PC-9 (cell line): ENCODE measurements at regions of chr1 and their contacts with region 1.

Region 1: DNA sequence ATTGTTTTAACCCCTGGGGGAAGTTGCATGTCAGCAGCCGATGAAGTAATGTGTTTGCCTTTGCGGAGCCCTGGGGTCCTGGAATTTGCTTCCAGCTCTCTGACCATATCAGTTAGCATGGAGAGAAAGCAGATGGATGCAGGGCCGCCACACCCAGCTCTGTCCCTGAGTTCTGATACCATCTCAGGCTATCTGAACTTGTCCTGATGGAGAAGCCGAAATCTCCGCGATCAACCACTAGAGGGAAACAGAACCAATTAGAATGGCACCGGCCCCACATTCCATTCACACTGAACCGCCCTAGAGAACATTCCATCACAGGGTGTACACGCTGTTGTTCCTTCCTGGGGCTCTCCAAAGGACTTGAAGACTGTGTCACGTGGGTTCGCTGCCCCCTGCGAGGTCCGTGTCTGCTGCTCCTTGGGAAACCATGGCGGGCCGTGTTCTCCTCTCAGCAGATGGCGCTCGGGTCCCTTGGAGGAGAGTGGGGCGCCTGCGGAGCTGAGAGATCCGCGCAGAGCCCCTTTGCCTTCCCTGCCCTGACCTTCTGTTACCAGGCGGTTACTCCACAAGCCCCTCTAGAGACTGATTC is 75.4 kb downstream of the ABCA4 start:
- DNase-seq: peak; percentile 92 to 97
- H3K4me3 ChIP-seq: no peak overlapping the region
- H3K27ac ChIP-seq: peak overlapping the region; percentile 28
- H3K4me1 ChIP-seq: peaks cover 30% of the 10 kb centered on the region
- H3K27me3 ChIP-seq: no peaks in the 10 kb centered on the region
- CTCF ChIP-seq: peak; percentile 90

Region 2: GRCh38 chr1:93607814-93608186 is 437.8 kb before region 1 on chr1:
- CTCF ChIA-PET with region 1: no interaction called
- POLR2A ChIA-PET with region 1: no interaction called
- intact Hi-C with region 1: no loop called
- DNase-seq: no peak
- H3K4me3 ChIP-seq: no peak overlapping the region
- H3K27ac ChIP-seq: no peak overlapping the region
- H3K4me1 ChIP-seq: peaks cover 51% of the 10 kb centered on the region
- H3K27me3 ChIP-seq: no peaks in the 10 kb centered on the region
- CTCF ChIP-seq: no peak

Region 3: GRCh38 chr1:93958032-93958725 is 87.4 kb before region 1 on chr1:
- CTCF ChIA-PET with region 1: no interaction called
- POLR2A ChIA-PET with region 1: no interaction called
- intact Hi-C with region 1: no loop called
- DNase-seq: no peak
- H3K4me3 ChIP-seq: no peak overlapping the region
- H3K27ac ChIP-seq: no peak overlapping the region
- H3K4me1 ChIP-seq: peaks cover 37% of the 10 kb centered on the region
- H3K27me3 ChIP-seq: no peaks in the 10 kb centered on the region
- CTCF ChIP-seq: no peak

Region 4: DNA sequence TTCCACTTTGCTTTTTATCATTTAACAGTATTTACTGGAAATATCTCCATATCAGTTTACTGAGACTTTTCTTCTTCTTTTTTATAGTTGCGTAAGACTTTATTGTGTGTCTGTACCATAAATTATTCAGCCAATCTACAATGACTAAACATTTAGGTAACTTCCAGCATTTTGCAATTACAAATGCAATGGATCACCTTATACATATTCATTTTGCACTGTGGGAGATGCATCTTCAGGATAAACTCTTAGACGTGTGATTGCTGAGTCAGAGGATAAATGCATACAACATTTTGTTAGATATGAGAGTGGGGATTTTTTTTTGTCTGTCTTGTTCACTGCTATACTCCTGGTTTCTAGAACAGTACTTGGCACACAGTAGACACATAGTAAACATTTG is 40.6 kb before region 1 on chr1:
- CTCF ChIA-PET with region 1: no interaction called
- POLR2A ChIA-PET with region 1: no interaction called
- intact Hi-C with region 1: no loop called
- DNase-seq: peak in 1 of 2 experiments; percentile 58
- H3K4me3 ChIP-seq: no peak overlapping the region
- H3K27ac ChIP-seq: no peak overlapping the region
- H3K4me1 ChIP-seq: peaks cover 12% of the 10 kb centered on the region
- H3K27me3 ChIP-seq: no peaks in the 10 kb centered on the region
- CTCF ChIP-seq: no peak

Region 5: DNA sequence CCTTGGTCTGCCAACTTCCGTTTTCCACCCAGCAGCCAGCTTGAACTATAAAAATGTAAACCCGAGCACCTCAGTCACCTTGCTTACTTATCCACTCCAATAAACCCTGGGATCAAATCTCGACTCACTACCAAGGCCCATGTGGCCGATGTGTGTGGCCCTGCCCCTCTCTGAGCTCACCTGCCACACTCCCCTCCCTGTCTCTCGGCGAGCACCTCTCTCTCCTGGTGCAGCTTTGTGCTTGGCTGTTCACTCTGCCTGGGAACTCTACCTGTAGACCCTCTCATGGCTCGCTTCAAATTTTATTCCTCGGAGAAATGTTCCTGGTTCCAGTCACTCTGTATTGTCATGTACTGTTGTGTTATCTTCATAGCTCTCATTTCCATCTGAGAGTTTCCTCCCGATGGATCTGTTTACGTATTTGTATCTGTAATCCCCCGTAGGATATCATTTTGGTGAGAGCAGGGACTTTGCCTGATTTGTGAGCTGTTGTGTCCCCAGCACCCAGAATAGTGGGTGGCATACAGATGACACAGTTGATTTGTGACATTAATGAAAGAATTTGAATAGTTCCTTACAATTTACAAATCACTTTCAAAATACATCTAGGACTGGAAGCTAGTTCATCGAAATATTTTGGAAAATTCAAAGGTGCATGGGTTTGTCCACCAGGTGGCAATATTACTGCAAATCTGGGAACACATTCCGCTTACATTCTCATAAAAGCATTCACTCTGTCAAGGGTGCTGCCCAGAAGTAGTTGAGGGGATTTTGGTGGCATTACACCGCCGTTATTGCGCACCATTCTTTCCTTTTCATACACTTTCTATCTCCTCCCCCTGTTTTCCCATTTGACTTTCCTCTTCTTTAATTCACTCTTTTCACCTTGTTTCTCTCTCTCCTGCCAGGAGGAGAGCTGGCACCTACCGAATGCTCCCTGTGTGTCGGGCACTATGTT is 19.9 kb before region 1 on chr1:
- CTCF ChIA-PET with region 1: interaction called, 9 read pairs
- POLR2A ChIA-PET with region 1: interaction called, 3 read pairs
- intact Hi-C with region 1: loop called (anchors 2 kb)
- DNase-seq: peak; percentile 54 to 77
- H3K4me3 ChIP-seq: no peak overlapping the region
- H3K27ac ChIP-seq: no peak overlapping the region
- H3K4me1 ChIP-seq: peaks cover 49% of the 10 kb centered on the region
- H3K27me3 ChIP-seq: no peaks in the 10 kb centered on the region
- CTCF ChIP-seq: peak; percentile 91

Region 6: GRCh38 chr1:94100785-94101540 is 55.4 kb after region 1 on chr1:
- CTCF ChIA-PET with region 1: interaction called, 12 read pairs
- POLR2A ChIA-PET with region 1: no interaction called
- intact Hi-C with region 1: loop called (anchors 1 kb)
- DNase-seq: peak; percentile 46 to 97
- H3K4me3 ChIP-seq: no peak overlapping the region
- H3K27ac ChIP-seq: peak overlapping the region; percentile 79
- H3K4me1 ChIP-seq: peaks cover 47% of the 10 kb centered on the region
- H3K27me3 ChIP-seq: no peaks in the 10 kb centered on the region
- CTCF ChIP-seq: no peak

Region 7: DNA sequence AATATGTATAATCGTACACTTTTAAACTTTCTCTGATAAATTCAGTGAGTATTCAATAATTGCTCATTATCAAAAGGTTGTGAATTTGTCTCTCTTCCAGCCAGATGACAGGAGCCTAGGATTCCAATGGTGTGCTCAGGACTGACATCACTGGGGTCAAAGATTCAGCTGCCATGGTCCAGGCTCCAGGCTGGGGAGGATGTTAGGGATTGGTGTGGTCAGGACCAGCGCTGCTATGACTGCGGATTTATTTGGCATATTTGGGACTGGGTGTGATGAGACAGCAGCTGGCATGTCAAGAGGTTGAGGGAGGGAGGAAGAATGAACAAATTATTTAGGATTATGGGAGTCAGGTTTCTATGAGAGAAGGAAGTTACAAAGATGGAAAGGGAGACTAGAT is 123.6 kb after region 1 on chr1:
- CTCF ChIA-PET with region 1: no interaction called
- POLR2A ChIA-PET with region 1: no interaction called
- intact Hi-C with region 1: loop called (anchors 5 kb)
- DNase-seq: no peak
- H3K4me3 ChIP-seq: no peak overlapping the region
- H3K27ac ChIP-seq: no peak overlapping the region
- H3K4me1 ChIP-seq: no peaks in the 10 kb centered on the region
- H3K27me3 ChIP-seq: no peaks in the 10 kb centered on the region
- CTCF ChIP-seq: no peak

Region 8: DNA sequence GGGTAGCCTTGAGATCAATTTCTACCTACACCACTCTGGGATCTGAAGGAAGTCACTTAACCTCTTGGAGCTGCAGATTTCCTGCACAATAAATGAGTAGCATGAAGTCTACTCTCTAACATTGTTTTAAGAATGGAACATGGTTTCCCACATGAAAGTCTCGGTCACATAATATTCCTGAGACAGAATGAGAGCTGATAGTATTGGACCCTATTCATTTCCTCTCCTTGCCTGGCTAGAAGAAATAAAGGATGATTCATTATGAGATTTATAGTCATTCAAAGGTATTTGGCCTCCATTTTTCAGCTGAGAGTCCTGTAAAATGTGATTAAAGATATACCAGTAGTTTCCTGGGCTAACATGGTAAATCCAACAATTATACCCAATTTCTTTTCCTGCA is 135.1 kb after region 1 on chr1:
- CTCF ChIA-PET with region 1: no interaction called
- POLR2A ChIA-PET with region 1: no interaction called
- intact Hi-C with region 1: no loop called
- DNase-seq: no peak
- H3K4me3 ChIP-seq: no peak overlapping the region
- H3K27ac ChIP-seq: peak overlapping the region; percentile 31
- H3K4me1 ChIP-seq: no peaks in the 10 kb centered on the region
- H3K27me3 ChIP-seq: no peaks in the 10 kb centered on the region
- CTCF ChIP-seq: no peak

Region 9: DNA sequence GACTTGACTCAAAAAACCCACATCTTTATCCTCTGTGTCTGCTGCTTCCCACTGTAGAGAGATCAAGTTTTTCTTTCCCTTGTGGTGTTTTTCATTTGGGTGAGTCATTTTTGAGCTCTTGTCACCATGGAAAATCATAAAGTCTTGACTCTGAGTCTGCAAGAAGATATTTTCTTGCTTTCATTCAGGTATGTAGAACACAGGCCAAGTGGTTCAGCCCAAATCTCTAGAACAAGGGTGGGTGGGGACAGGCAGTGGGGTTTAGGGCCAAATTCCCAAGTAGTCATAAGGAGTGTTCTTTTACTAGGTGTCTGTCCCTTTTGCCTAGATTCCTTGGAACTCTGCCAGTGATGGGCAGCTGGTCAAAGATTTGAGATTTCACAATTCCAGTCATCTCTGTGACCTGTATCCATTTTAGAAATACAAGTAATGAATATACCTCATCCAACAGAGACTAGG is 213.3 kb after region 1 on chr1:
- CTCF ChIA-PET with region 1: interaction called, 10 read pairs
- POLR2A ChIA-PET with region 1: interaction called, 3 read pairs
- intact Hi-C with region 1: no loop called
- DNase-seq: peak; percentile 91 to 100
- H3K4me3 ChIP-seq: peak overlapping the region; percentile 13; the same call in 1 of the 2 replicates
- H3K27ac ChIP-seq: peak overlapping the region; percentile 98
- H3K4me1 ChIP-seq: peaks cover 74% of the 10 kb centered on the region
- H3K27me3 ChIP-seq: no peaks in the 10 kb centered on the region
- CTCF ChIP-seq: no peak

Region 10: DNA sequence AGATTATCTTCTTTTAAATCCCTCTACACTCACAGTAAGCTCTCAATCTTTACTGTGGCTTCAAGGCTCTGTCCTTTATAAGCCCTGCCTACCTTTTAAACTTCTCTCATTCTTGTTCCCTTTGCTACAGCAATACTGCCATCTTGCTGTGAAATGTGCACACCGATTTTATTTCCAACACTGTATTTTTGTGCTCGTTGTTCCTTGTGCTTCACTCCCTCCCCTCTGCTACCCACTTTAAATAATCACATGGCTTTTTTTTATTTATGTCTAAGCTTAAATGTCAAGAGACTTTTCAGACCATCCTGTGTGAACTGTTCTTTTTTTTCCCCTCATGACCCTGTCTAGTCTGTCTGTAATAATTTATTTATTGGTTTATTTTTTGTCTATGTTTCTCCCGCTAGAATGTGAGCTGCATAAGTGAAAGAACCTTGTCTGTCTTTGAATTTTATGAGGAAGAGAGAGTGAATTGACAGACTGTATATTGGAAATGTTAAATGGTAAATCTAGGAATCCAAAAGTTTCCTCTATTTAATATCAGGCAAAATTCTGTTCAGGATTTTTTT is 418.3 kb after region 1 on chr1:
- CTCF ChIA-PET with region 1: interaction called, 3 read pairs
- POLR2A ChIA-PET with region 1: no interaction called
- intact Hi-C with region 1: loop called (anchors 1 kb)
- DNase-seq: peak; percentile 29 to 67
- H3K4me3 ChIP-seq: no peak overlapping the region
- H3K27ac ChIP-seq: peak overlapping the region; percentile 11; the same call in 1 of the 2 replicates
- H3K4me1 ChIP-seq: peaks cover 5% of the 10 kb centered on the region
- H3K27me3 ChIP-seq: no peaks in the 10 kb centered on the region
- CTCF ChIP-seq: peak; percentile 86